H1 (cell line): ENCODE measurements at regions of chr1 and their contacts with region 1.

Region 1: DNA sequence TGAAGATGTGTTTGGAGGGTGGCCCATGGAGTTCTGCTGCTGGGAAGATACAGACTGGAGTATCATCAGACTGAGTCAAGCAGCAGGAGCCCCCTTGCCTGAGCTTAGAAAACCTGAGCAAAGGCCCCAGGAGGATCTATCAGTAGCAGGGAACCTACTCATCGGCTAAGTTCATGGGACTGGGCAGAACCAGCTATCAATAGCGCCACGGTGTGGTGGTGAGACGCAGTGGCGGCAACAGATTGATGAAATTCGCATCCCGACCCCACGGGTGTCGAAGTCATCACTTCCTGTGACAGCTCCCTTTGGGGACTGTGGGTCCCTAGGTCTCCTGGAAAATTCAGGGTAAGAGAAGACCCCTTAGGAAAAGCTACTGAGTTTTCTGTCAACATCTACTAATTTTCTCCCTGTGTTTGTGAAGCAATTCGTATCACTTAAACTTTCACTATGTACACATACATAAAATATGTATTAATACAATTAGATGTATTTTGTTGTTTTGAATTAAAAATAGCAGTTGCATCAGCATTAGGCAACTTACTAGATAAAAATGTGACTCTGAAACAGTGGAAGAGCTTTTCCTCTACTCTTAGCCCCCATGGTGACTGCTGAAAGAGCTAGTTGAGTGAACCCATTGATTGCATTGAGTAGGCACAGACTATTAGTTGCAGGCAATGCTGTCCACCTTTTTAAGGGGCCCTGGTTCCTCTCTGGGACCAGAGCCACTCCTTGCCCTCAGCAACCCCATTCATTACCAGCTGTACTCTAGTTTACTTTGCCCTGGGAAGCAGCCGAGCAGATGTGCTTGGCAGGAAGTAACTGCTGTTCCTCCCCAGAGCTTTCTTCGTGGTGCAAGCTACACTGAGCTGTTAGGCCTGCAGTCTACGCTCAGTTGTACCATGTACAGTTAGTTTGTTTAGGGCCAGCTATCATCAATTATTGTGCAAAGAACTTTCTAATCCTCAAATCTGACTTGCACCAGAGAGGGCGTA is 7.3 kb upstream of the CACNA1S start:
- DNase-seq: peak in 1 of 2 experiments; percentile 81
- H3K4me3 ChIP-seq: no peak overlapping the region
- H3K27ac ChIP-seq: no peak overlapping the region
- H3K4me1 ChIP-seq: peaks cover 0 to 3% (median 0%) of the 10 kb centered on the region in 4 experiments; a peak in 1 of 7 replicates
- H3K27me3 ChIP-seq: peaks cover 9 to 22% (median 17%) of the 10 kb centered on the region in 4 experiments
- CTCF ChIP-seq: peak; percentile 91 to 98 (median 98)
- EP300 ChIP-seq: no peak
- POLR2A ChIP-seq: no peak
- RAD21 ChIP-seq: peak; percentile 80 to 86

Region 2: GRCh38 chr1:201009962-201010645 is 109.4 kb before region 1 on chr1:
- CTCF ChIA-PET with region 1: interaction called, 18 read pairs
- POLR2A ChIA-PET with region 1: interaction called, 3 read pairs
- DNase-seq: no peak
- H3K4me3 ChIP-seq: no peak overlapping the region
- H3K27ac ChIP-seq: 0 out of 2 replicates have a peak overlapping the region, but pooled peaks have one; percentile 26
- H3K4me1 ChIP-seq: peaks cover 0 to 17% (median 11%) of the 10 kb centered on the region in 4 experiments; a peak in 6 of 7 replicates
- H3K27me3 ChIP-seq: no peaks in the 10 kb centered on the region
- CTCF ChIP-seq: no peak
- EP300 ChIP-seq: no peak
- POLR2A ChIP-seq: no peak
- RAD21 ChIP-seq: no peak

Region 3: GRCh38 chr1:201059871-201060555 is 59.5 kb before region 1 on chr1:
- CTCF ChIA-PET with region 1: interaction called, 12 read pairs
- POLR2A ChIA-PET with region 1: no interaction called
- DNase-seq: no peak
- H3K4me3 ChIP-seq: no peak overlapping the region
- H3K27ac ChIP-seq: no peak overlapping the region
- H3K4me1 ChIP-seq: peaks cover 0 to 18% (median 10%) of the 10 kb centered on the region in 4 experiments; a peak in 6 of 7 replicates
- H3K27me3 ChIP-seq: no peaks in the 10 kb centered on the region
- CTCF ChIP-seq: no peak
- EP300 ChIP-seq: no peak
- POLR2A ChIP-seq: no peak
- RAD21 ChIP-seq: no peak

Region 4: GRCh38 chr1:201108614-201109013 is 10.9 kb before region 1 on chr1:
- CTCF ChIA-PET with region 1: interaction called, 41 read pairs
- POLR2A ChIA-PET with region 1: no interaction called
- DNase-seq: no peak
- H3K4me3 ChIP-seq: no peak overlapping the region
- H3K27ac ChIP-seq: no peak overlapping the region
- H3K4me1 ChIP-seq: peaks cover 0 to 7% (median 3%) of the 10 kb centered on the region in 4 experiments; a peak in 3 of 7 replicates
- H3K27me3 ChIP-seq: peaks cover 0 to 3% (median 2%) of the 10 kb centered on the region in 4 experiments; a peak in 3 of 7 replicates
- CTCF ChIP-seq: no peak
- EP300 ChIP-seq: no peak
- POLR2A ChIP-seq: no peak
- RAD21 ChIP-seq: no peak

Region 5: DNA sequence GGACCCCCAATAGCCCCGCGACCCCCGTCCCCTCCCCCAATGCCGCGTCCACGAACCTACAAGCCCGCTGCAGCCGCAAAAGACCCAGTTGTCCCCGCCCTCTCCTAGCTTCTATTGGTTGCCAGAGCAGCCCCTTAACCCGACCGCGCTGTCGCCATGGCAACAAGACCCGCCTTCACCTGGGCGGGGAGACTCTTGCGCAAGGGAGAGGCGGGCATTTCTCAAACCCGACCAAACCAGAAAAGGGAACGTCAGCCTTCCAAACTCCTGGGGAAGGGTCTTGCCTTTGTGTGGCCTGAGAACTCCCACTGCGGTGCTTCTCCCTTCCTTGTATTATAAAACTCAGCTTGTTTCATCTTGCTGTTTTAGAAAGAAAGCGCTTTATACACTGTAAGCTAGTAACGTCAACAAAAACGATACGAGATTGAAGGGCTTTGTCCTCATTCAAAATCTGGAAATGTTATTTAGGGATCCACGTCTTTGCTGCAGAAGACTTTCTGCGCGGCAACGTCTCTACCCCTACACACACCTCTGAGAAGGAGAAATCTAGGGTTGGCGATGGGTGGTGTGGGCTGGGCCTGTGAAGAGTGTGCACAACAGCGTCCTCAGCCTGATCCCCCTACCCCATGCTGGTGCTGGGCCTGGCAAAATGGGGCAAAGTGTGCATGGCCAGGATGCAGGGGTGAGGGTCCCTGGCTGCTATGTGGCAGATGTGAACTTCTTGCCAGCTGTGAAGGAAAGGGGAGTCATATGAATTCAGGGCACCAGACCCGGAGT is 35.1 kb after region 1 on chr1 and contains the start of gene TMEM9:
- CTCF ChIA-PET with region 1: interaction called, 13 read pairs
- POLR2A ChIA-PET with region 1: interaction called, 5 read pairs
- DNase-seq: peak; percentile 92 to 99
- H3K4me3 ChIP-seq: peak within 1 kb of the TSS; percentile 80 to 94 (median 82)
- H3K27ac ChIP-seq: peak within 1 kb of the TSS; percentile 74; the same call in 1 of the 2 replicates
- H3K4me1 ChIP-seq: peaks cover 0 to 13% (median 7%) of the 10 kb centered on the region in 4 experiments; a peak in 6 of 7 replicates
- H3K27me3 ChIP-seq: no peaks in the 10 kb centered on the region; a peak in 1 of 7 replicates
- CTCF ChIP-seq: no peak
- EP300 ChIP-seq: no peak
- POLR2A ChIP-seq: peak; percentile 20 to 67; a peak in 1 of 3 replicates
- RAD21 ChIP-seq: no peak
- total RNA-seq, gene TMEM9: 79.9 and 83.2 TPM in 2 replicates